Activated CD8-positive, alpha-beta T cell treated with anti-CD3 and anti-CD28 coated beads for 36 hours (primary cell): ENCODE measurements at regions of chr19 and their contacts with region 1.

Region 1: DNA sequence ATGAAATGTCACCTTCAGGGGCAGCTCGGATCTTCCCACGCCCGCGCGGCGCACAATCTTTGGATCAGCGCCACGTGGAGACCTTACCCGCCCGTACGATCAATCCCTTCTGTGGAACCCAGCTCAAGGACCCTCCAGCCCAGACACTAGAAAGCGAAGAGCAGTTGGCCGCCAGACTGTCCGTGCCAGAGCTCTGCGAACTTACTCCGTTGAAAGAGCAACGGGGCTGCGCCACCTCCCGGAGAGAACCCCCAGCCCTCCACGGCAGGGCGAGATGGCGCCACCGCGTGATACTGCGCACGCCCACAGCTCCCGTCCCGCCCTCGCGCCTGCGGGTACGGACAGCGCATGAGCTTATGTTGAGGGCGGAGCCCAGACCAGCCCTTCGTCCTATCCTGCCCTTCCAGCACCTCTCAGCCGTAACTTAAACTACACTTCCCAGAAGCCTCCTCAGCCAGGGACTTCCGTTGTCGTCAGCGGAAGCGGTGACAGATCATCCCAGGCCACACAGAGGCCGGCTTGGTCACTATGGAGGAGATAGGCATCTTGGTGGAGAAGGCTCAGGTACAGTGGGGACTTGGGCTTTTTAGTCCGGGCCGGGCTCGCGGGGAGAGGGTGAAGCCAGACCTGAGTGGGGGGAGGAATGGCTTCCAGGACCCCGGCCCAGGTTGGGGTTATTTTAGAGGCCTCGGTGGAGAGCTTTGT is at the start of gene PSMC4:
- DNase-seq: peak; percentile 99
- ATAC-seq: peak; percentile 97
- H3K4me3 Mint-ChIP-seq: peak within 1 kb of the TSS; percentile 95
- H3K27ac Mint-ChIP-seq: peak within 1 kb of the TSS; percentile 98
- H3K4me1 Mint-ChIP-seq: peaks cover 48% of the 10 kb centered on the region
- H3K27me3 Mint-ChIP-seq: no peaks in the 10 kb centered on the region
- CTCF ChIP-seq: peak; percentile 72
- total RNA-seq, gene PSMC4: 105 to 107 TPM

Region 2: GRCh38 chr19:39846176-39846677 is 124.6 kb before region 1 on chr19 and contains the start of gene FBL:
- CTCF ChIA-PET with region 1: interaction called, 17 read pairs
- POLR2A ChIA-PET with region 1: interaction called, 15 read pairs
- intact Hi-C with region 1: no loop called
- DNase-seq: peak; percentile 98
- ATAC-seq: peak; percentile 90
- H3K4me3 Mint-ChIP-seq: peak within 1 kb of the TSS; percentile 91
- H3K27ac Mint-ChIP-seq: peak within 1 kb of the TSS; percentile 95
- H3K4me1 Mint-ChIP-seq: peaks cover 38% of the 10 kb centered on the region
- H3K27me3 Mint-ChIP-seq: no peaks in the 10 kb centered on the region
- CTCF ChIP-seq: no peak
- total RNA-seq, gene FBL: 901 to 905 TPM

Region 3: GRCh38 chr19:39906820-39907611 is 63.8 kb before region 1 on chr19:
- CTCF ChIA-PET with region 1: interaction called, 13 read pairs
- POLR2A ChIA-PET with region 1: no interaction called
- intact Hi-C with region 1: no loop called
- DNase-seq: no peak
- ATAC-seq: no peak
- H3K4me3 Mint-ChIP-seq: no peak overlapping the region
- H3K27ac Mint-ChIP-seq: no peak overlapping the region
- H3K4me1 Mint-ChIP-seq: peaks cover 9% of the 10 kb centered on the region
- H3K27me3 Mint-ChIP-seq: no peaks in the 10 kb centered on the region
- CTCF ChIP-seq: no peak

Region 4: DNA sequence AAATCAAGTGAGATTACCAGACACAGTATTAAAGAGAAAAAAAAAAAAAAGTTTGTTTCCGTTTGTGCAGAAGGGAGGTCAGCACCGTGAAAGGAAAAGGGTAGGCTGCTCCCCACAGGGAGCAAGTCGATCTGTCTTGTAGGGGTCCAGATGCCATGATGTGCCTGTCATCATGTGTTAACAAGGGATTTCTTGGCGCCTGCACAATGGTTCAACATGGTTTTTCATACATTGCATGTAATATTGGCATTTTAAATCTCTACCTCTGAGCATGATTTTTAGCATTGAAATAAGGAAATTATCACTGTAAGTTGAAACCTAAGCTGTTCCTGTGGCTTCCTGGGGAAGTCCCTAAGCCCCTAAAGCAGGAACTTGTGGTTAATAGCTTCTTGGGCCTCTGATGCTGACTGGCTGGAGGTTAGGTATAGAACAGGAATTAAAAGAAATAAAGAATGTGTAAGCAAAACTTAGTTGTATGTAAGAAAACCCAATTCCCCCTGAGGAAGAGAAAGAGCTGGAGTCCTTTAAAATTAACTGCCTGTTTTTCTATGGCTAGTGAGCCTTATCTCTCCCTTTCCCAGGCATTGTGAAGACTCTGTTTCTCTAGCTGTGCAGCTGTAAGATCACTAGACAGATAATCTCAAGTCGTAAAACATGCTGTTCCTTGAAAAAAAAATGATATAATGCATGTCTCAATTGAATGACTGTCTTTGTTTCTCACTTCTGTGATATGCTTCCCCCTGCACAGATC is 29.0 kb before region 1 on chr19:
- CTCF ChIA-PET with region 1: interaction called, 86 read pairs
- POLR2A ChIA-PET with region 1: interaction called, 19 read pairs
- intact Hi-C with region 1: no loop called
- DNase-seq: peak; percentile 76
- ATAC-seq: peak; percentile 69
- H3K4me3 Mint-ChIP-seq: peak overlapping the region; percentile 69
- H3K27ac Mint-ChIP-seq: peak overlapping the region; percentile 87
- H3K4me1 Mint-ChIP-seq: peaks cover 72% of the 10 kb centered on the region
- H3K27me3 Mint-ChIP-seq: no peaks in the 10 kb centered on the region
- CTCF ChIP-seq: no peak

Region 5: GRCh38 chr19:39996811-39997594 is 26.2 kb after region 1 on chr19 and contains the start of gene ZNF546:
- CTCF ChIA-PET with region 1: interaction called, 6 read pairs
- POLR2A ChIA-PET with region 1: interaction called, 30 read pairs
- intact Hi-C with region 1: no loop called
- DNase-seq: peak; percentile 96
- ATAC-seq: peak; percentile 90
- H3K4me3 Mint-ChIP-seq: peak within 1 kb of the TSS; percentile 89
- H3K27ac Mint-ChIP-seq: peak within 1 kb of the TSS; percentile 97
- H3K4me1 Mint-ChIP-seq: peaks cover 45% of the 10 kb centered on the region
- H3K27me3 Mint-ChIP-seq: no peaks in the 10 kb centered on the region
- CTCF ChIP-seq: no peak
- total RNA-seq, gene ZNF546: 5.2 to 5.6 TPM

Region 6: GRCh38 chr19:40013991-40014390 is 43.2 kb after region 1 on chr19:
- CTCF ChIA-PET with region 1: no interaction called
- POLR2A ChIA-PET with region 1: no interaction called
- intact Hi-C with region 1: no loop called
- DNase-seq: no peak
- ATAC-seq: no peak
- H3K4me3 Mint-ChIP-seq: no peak overlapping the region
- H3K27ac Mint-ChIP-seq: no peak overlapping the region
- H3K4me1 Mint-ChIP-seq: no peaks in the 10 kb centered on the region
- H3K27me3 Mint-ChIP-seq: no peaks in the 10 kb centered on the region
- CTCF ChIP-seq: no peak